OCI-LY7 (cell line): ENCODE measurements at regions of chr22 and their contacts with region 1.

Region 1: DNA sequence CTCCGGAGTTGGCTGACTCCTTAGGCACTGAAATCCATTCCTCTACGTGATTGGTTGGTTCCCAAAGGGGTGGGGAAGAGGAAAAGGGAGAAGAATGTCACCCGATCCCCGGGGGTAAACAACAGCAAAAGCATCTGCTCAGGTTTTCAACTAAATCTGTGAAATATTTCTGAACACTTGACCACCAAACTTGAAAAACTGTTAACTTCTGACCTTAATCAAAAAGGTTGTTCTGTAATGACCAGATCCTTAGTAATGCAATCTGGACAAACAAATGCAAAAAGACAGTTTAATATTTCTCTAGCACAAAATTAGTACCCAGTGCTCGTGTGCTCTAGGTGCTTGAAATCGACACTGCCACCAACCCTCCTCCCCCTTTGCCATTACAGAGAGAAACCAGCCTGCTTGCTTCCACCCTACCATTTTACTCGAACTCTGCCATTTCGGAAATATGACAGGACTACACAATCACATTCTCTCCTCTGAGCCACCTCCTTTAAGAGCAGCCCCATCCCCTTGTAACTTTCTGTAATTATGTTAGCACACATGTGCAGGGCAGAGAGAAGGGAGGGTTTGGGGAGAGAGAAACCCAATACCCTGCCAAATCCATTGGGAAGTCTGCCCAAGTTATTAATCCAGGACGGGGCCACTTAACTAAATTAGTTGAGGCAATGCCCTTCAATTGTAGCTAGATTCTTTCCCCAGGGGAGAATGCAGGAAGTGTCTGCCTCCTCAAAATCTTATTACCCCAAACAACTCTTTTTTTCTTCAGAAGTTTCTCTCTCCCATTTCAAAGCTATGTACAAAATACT is 113.8 kb downstream of the RBFOX2 start:
- DNase-seq: peak; percentile 70
- H3K4me3 ChIP-seq: peak overlapping the region; percentile 59
- H3K27ac ChIP-seq: peak overlapping the region; percentile 76
- H3K4me1 ChIP-seq: peaks cover 99% of the 10 kb centered on the region
- CTCF ChIP-seq: no peak

Region 2: DNA sequence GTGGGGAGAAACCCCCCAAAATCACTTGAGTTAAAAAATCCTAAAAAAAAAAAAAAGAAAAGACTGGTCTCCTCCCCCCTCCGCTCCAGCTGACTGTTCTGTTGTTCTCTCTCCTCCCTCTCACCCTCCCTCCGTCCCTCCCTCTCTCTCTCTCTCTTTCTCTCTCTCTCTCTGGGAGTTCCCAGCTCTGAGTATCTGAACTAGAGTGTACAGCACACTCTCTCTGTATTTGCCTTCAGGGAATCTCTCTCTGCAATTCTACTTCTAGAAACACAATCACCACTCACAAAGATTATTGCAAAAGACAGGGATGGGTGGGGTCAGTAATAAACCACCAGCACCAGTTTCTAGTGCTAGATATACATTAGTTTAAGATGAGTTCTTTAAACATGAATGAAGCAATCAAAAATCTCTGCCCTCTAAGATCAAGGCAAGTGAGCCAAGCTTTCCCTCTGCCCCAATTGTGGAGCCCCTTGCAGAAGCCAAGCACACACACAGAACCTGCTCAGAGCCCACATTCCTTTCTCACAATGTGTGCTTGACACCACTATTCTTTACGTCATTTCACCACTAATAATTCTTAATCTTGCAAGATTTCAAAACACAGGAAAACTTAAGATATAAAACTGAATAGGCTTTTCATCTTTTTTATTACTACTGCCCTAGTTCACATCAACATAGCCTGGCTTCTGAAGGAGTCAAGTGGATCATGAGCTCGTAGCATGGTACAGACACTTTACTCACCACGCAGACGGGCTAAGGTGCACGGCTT is 19.7 kb before region 1 on chr22:
- CTCF ChIA-PET with region 1: no interaction called
- POLR2A ChIA-PET with region 1: interaction called, 11 read pairs
- intact Hi-C with region 1: no loop called
- DNase-seq: peak; percentile 61
- H3K4me3 ChIP-seq: peak overlapping the region; percentile 68
- H3K27ac ChIP-seq: peak overlapping the region; percentile 73
- H3K4me1 ChIP-seq: peaks cover 83% of the 10 kb centered on the region
- CTCF ChIP-seq: no peak; the same call in 1 of the 2 replicates

Region 3: GRCh38 chr22:35900483-35901168 is 14.2 kb before region 1 on chr22:
- CTCF ChIA-PET with region 1: interaction called, 3 read pairs
- POLR2A ChIA-PET with region 1: interaction called, 11 read pairs
- intact Hi-C with region 1: no loop called
- DNase-seq: no peak
- H3K4me3 ChIP-seq: peak overlapping the region; percentile 29
- H3K27ac ChIP-seq: peak overlapping the region; percentile 78
- H3K4me1 ChIP-seq: peaks cover 86% of the 10 kb centered on the region
- CTCF ChIP-seq: no peak